Posterior vena cava (tissue), 2 donors: ENCODE measurements at regions of chr3 and their contacts with region 1.

Region 1: DNA sequence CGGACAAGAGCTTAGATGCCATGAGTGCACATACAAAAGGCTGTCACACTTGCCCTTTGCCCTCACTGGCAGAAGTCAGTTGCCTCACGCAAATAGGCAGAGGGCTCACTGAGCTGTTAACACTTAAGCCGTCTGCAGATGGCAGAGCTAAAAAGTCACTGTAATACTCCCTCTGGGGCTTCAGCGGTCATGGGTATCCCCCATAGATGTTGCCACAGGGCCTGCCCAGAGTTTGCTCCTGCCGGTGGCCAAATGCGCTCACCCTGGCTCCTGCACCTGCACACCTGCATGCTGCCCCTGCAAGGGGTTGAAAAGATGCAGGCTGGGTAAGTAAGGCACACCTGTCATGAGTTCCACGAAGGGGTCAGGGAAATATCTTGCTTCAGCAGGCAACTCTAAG is 741.5 kb downstream of the EDEM1 start:
- DNase-seq: no peak

Region 2: GRCh38 chr3:5826467-5826866 is 102.6 kb before region 1 on chr3:
- intact Hi-C with region 1: no loop called
- DNase-seq: no peak

Region 3: DNA sequence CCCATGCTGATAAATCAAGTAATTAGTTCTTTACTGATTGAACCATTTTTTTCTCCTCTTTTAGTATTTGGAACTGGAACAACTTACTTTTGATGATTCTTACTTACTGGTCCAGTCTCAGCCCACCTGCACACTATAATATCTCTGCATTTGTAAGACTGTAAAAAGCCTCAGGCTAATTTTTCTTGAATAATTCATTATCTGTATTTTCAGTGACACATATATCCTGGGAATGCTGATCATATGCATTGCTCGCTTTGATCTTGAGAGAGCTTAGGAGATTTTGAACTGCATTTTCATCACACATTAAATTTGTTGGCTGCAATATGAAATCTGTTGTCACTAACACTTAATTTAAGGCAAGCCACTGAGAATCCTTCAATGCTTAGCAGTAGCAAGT is 19.1 kb after region 1 on chr3:
- intact Hi-C with region 1: loop called in 1 of 2 experiments (anchors 1 kb)
- DNase-seq: no peak

Region 4: DNA sequence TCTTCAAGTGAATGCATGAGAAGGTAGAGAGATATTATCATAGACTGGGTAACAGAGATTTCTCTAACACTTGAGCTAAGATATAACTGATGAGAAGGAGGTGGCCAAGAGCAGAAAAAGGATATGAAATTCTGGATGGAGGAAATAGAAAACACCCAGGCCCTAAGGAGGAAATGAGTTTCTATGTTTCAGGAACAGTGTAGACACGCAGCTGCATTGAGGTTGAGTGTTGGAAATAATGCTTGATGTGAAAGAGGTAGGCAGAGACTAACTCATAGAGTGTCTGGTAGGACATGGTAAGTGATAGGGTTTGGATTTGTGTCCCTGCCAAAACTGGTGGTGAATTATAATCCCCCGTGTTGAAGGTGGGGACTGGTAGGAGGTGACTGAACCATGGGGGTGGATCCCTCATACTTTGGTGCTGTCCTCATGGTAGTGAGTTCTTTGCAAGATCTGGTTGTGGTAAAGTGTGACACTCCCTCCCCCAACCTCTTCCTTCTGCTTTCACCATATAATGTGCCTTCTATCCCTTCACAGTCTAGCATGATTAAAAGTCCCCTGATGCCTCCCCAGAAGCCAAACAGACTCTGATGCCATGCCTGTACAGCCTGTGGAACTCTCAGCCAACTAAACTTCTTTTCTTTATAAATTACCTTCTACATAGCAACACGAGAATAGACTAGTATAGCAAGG is 45.7 kb after region 1 on chr3:
- intact Hi-C with region 1: loop called in 1 of 2 experiments (anchors 2 kb)
- DNase-seq: no peak